Mammary epithelial cell (primary cell): ENCODE measurements at regions of chr14 and their contacts with region 1.

Region 1: DNA sequence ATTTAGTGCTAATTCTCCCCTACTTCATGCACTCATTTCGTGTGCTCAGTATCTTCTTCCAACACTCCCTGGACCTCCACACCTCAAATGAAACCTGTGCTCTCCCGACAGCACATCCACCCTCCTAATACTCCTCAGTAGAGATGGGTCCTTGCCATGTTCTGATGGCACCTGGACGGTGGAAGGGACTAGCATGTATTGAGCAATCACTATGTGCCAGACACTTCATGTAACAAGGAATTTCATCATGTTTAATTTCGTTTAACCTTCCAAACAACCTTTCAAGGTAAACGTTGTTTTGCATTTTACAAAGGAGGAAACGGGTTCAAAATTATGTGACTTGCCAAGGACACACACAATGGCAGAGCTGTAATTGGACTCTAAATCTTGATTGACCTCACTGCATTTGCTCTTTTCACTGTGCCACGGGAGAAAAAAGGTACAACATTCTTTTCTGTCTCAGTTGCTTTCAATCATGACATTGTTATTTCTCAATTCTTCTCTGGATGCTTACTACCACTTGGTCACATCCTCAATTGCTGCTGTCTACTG is 12.2 kb upstream of the SLC7A8 start:
- DNase-seq: no peak
- H3K4me3 ChIP-seq: no peak overlapping the region
- H3K27ac ChIP-seq: no peak overlapping the region
- H3K4me1 ChIP-seq: no peaks in the 10 kb centered on the region
- H3K27me3 ChIP-seq: no peaks in the 10 kb centered on the region
- CTCF ChIP-seq: no peak

Region 2: DNA sequence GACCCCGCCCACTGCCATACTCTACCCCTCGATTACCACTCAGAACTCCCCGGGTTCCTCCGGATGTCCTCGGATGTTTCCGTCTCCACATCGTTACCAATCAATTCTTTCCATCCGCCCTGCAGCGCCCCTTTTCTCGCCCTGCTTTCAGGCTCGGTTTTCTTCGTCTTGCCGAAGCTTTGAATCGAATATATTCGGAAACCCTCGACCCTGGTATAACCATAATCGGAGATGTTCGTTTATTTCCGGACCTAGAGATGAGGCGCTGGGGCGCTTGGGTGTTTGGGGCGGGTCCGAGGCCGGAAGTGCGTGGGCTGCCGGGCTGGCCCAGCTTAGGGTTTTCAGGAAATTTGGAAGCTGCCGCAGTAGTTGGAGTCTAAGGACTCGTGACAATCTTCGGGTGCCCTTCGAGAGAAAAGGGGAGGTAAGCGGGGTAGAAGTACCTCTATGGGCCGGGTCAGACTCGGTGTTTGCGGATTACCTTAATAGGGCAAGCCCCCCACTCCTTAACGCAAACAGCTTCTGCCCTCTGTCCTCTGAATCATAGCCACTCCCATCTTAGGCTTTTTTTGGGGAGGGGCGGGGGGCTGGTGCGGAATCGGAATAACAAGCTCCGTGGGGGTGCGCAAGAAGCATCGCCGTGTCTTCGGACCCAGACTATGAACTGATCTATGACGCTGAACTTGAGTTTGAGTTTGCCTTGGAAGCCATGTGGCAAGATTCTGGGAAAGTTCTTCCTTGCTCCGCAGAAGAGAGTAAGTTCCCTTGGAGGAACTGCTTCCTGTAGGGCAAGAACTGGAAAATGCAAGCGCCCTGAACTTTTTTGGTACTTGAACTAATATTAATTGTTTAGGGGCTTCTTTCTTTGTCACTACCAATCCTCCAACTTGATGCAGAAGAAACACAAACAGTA is 100.2 kb before region 1 on chr14 and contains the start of gene C14orf119:
- CTCF ChIA-PET with region 1: interaction called, 19 read pairs
- dilution Hi-C with region 1: no loop called
- in situ Hi-C with region 1: no loop called
- intact Hi-C with region 1: no loop called
- DNase-seq: peak; percentile 99
- H3K4me3 ChIP-seq: peak within 1 kb of the TSS; percentile 68 to 92 (median 86)
- H3K27ac ChIP-seq: peak within 1 kb of the TSS; percentile 97
- H3K4me1 ChIP-seq: peaks cover 23% of the 10 kb centered on the region
- H3K27me3 ChIP-seq: no peaks in the 10 kb centered on the region
- CTCF ChIP-seq: no peak
- total RNA-seq, gene C14orf119: 39.2 to 57.6 TPM

Region 3: GRCh38 chr14:23120541-23121251 is 74.9 kb before region 1 on chr14:
- CTCF ChIA-PET with region 1: interaction called, 10 read pairs
- dilution Hi-C with region 1: no loop called
- in situ Hi-C with region 1: no loop called
- intact Hi-C with region 1: no loop called
- DNase-seq: peak; percentile 63
- H3K4me3 ChIP-seq: no peak overlapping the region
- H3K27ac ChIP-seq: no peak overlapping the region
- H3K4me1 ChIP-seq: peaks cover 4% of the 10 kb centered on the region
- H3K27me3 ChIP-seq: no peaks in the 10 kb centered on the region
- CTCF ChIP-seq: peak; percentile 100

Region 4: DNA sequence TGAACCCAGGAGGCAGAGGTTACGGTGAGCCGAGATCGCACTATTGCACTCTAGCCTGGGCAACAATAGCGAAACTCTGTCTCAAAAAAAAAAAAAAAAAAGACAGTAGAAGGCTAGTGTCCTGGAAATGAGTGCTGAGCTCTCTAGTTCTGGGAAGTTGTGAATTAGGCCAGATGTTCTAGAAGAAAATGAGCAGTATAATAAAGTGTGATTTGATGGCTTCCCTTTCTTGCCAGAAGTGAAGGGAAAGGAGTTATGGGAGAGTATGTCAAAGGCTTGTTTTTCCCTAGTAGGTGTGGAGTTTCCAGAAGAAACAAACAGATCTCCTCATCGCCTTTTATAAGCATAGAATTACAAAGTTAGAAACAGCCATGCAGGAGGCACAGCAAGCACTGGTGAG is 62.6 kb after region 1 on chr14:
- CTCF ChIA-PET with region 1: no interaction called
- dilution Hi-C with region 1: no loop called
- in situ Hi-C with region 1: no loop called
- intact Hi-C with region 1: no loop called
- DNase-seq: no peak
- H3K4me3 ChIP-seq: no peak overlapping the region
- H3K27ac ChIP-seq: no peak overlapping the region
- H3K4me1 ChIP-seq: no peaks in the 10 kb centered on the region
- H3K27me3 ChIP-seq: no peaks in the 10 kb centered on the region
- CTCF ChIP-seq: no peak

Region 5: DNA sequence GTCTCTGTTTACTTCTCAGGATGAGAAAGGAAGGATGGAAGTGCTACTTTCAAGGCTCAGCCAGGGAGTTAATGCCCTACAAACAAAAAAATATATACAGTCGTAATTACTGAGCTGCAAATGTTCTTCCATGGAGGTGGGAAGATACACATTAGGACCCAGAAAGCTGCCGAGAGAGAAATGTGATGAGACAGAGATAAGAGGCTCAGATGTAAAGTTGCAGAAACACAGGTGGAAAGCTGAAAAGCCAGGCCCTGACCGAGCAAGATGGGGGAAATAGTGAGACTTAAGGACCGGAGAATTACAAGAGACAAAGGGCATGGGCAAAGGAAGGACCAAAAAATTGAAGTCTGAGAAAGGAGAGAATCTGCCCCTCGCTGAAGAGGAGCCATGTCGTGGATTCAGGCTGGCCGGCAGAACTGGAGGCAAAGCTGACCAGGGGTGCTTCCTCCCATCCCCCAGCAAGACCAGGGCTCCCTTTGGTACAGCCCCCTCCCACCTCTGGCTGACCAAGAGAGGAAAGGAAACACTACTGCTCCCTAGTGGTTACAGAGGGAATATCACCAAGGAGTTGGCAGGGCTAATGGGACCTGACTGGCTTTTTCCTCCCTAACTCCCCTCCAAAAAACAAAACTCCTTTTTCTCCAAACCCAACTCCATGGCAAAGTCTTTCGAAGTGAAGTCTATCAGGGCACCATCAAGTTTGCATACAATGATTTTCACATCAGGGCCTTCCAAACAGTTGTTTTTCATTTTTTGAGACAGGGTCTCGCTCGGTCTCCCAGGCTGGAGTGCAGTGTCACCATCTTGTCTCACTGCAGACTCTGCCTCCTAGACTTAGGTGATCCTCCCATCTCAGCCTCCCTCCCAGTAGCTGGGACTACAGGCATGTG is 343.9 kb after region 1 on chr14:
- CTCF ChIA-PET with region 1: no interaction called
- dilution Hi-C with region 1: no loop called
- in situ Hi-C with region 1: no loop called
- intact Hi-C with region 1: no loop called
- DNase-seq: peak; percentile 9
- H3K4me3 ChIP-seq: no peak overlapping the region
- H3K27ac ChIP-seq: no peak overlapping the region
- H3K4me1 ChIP-seq: no peaks in the 10 kb centered on the region
- H3K27me3 ChIP-seq: no peaks in the 10 kb centered on the region
- CTCF ChIP-seq: peak; percentile 78